ENCODE measurements at regions of chr19 and their contacts with region 1.

Region 1: DNA sequence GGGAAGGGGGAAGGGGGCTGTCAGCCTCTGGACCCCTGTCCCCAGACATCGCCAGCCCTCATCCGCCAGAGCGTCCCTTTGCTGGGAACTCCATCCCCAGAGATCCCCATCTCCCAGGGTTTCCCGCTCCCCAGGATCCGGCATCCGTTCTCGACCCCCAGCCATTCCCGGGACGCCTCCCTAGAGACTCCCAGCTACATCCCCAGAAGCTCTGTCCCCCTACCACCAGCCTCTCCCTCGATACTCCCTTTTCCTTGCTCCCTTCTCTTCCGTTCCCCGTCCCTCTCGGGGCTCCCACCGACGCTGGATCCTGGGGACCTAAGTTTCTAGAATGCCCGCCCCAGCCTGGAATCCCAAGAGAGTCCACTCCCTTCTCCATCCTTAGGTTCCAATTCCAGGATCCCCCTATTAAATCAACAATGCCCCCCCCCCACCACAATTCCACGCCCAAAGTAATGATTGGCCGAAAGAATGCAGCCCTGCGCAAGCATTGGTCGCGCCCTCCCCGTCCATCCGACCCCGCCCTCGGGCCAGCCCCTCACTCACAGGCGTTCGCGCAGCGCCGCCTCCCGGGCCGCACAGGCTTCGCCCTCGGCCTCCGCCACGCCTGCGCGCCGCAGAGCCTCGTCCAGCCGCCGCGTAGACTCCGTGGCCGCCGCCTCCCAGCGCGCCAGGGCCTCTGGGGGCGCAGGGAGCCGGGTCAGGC is 3.2 kb downstream of the CCDC194 start:
- DNase-seq: peak; percentile 93
- H3K4me3 Mint-ChIP-seq: peak overlapping the region; percentile 82
- H3K27ac Mint-ChIP-seq: no peak overlapping the region
- H3K4me1 Mint-ChIP-seq: peaks cover 20% of the 10 kb centered on the region
- H3K27me3 Mint-ChIP-seq: no peaks in the 10 kb centered on the region

Region 2: DNA sequence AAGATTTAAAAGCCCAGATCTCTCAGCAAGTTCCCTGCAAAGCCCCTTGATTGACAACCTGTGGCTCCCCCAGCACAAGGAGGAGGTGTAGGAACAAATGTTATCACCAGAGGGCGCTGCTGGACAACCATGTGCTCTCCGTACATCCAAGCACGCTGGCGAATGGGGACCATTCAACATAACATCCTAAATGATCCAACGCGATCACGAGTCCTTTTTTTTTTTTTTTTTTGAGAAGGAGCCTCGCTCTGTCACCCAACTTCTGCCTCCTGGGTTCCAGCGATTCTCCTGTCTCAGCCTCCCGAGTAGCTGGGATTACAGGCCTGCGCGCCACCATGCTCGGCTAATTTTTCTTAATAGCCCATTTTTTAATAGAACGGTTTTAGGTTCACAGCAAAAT is 619.2 kb before region 1 on chr19:
- CTCF ChIA-PET with region 1: interaction called, 3 read pairs
- intact Hi-C with region 1: loop called (anchors 10 kb)
- DNase-seq: peak; percentile 88
- H3K4me3 Mint-ChIP-seq: no peak overlapping the region
- H3K27ac Mint-ChIP-seq: no peak overlapping the region
- H3K4me1 Mint-ChIP-seq: no peaks in the 10 kb centered on the region
- H3K27me3 Mint-ChIP-seq: peaks cover 11% of the 10 kb centered on the region

Region 3: DNA sequence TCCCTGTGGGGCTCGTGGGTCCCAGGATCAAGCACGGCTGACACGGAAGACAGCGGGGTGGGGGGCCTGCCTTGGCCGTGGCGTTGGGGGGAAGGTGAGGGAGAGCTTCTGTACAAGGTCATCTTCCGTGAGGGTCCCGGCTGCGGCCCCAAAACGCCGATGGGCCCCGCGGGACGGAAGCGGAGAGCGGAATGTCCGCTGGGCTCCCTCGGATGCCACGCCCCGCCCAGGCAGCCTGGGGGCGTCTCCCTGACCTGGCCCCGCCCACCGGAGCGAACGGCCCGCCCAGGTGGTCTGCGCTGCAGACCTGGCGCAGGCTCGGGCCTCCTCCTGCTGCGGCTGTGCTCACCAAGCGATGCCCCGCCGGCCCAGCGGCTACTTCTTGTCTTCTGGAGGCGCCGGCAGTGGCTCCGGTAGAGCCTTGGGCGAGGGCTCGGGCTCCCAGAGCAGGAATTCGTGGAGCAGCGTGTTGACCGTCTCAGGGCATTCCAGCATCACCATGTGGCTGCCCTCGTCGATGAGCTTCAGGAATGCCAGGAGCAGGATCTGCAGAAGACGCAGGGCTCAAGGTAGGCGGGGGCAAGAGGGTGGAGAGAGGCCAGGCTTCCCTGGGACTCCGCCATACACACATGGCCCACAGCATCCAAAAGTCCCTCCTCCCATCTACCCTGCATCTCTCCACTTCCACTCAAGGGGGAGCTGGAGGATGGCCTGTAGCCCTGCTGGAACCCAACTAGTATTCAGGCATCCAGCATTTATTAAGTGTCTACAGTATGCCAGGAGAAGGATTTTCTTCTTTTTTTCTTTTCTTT is 98.3 kb before region 1 on chr19:
- CTCF ChIA-PET with region 1: interaction called, 11 read pairs
- intact Hi-C with region 1: loop called (anchors 1 kb)
- DNase-seq: peak; percentile 88
- H3K4me3 Mint-ChIP-seq: peak overlapping the region; percentile 87
- H3K27ac Mint-ChIP-seq: peak overlapping the region; percentile 56
- H3K4me1 Mint-ChIP-seq: peaks cover 8% of the 10 kb centered on the region
- H3K27me3 Mint-ChIP-seq: no peaks in the 10 kb centered on the region

Region 4: DNA sequence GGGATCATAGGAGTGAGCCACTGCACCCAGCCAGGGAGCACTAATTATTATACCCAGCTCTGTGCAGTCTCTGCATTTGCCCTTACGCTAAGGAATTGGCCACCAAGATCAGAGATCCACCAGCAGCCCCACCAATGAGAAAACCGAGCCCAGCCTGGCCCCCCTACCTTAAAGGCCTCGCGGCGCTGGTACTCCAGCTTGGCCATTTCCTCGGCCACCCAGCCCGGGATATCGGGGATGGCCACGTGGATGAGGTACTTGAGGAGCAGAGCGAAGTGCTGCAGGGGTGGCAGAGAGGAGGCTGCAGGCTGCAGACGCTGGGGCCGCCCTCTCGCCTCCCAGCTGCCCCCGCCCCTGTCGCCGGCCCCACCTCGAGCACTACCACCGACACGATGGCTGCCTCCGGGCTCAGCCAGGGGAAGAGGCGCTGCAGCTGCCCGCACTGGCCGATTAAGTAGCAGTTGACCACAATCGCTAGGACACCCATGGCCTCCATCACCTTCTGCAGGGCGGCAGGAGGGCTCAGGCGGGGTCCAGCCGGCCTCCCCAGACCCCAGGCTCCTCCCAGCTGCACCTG is 63.7 kb before region 1 on chr19:
- CTCF ChIA-PET with region 1: no interaction called
- intact Hi-C with region 1: no loop called
- DNase-seq: no peak
- H3K4me3 Mint-ChIP-seq: peak overlapping the region; percentile 21
- H3K27ac Mint-ChIP-seq: no peak overlapping the region
- H3K4me1 Mint-ChIP-seq: peaks cover 13% of the 10 kb centered on the region
- H3K27me3 Mint-ChIP-seq: no peaks in the 10 kb centered on the region

Region 5: DNA sequence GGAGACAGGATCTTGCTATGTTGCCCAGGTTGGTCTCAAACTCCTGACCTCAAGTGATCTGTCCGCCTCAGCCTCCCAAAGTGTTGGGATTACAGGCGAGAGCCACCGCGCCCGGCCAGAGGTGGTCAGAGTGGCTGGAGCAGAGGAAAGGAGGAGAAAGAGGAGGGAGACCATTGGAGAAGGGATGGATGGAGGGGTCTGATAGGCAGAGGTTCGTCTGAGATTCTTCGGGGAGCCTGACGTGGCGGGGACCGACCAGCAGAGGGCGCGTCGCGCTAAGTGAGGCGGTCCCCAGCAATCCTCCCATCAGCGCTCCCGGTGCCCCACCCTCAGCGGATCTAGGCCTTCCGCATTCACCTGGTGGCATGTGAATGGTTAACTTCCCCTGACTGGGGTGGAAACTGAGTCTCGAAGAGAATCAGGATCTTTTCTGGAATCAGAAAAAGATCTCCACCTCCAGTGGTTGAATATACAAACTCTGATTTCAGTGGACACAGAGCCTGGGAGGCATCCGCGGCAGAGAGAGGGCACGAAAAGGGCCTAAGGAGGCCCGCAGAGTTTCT is 44.6 kb before region 1 on chr19:
- CTCF ChIA-PET with region 1: interaction called, 17 read pairs
- intact Hi-C with region 1: loop called (anchors 1 kb)
- DNase-seq: peak; percentile 88
- H3K4me3 Mint-ChIP-seq: no peak overlapping the region
- H3K27ac Mint-ChIP-seq: no peak overlapping the region
- H3K4me1 Mint-ChIP-seq: peaks cover 3% of the 10 kb centered on the region
- H3K27me3 Mint-ChIP-seq: peaks cover 8% of the 10 kb centered on the region

Region 6: GRCh38 chr19:17419621-17420466 is 29.0 kb after region 1 on chr19 and contains the start of gene MVB12A:
- CTCF ChIA-PET with region 1: interaction called, 5 read pairs
- intact Hi-C with region 1: loop called (anchors 1 kb)
- DNase-seq: peak; percentile 98
- H3K4me3 Mint-ChIP-seq: peak within 1 kb of the TSS; percentile 87
- H3K27ac Mint-ChIP-seq: peak within 1 kb of the TSS; percentile 87
- H3K4me1 Mint-ChIP-seq: peaks cover 16% of the 10 kb centered on the region
- H3K27me3 Mint-ChIP-seq: no peaks in the 10 kb centered on the region
- total RNA-seq, gene MVB12A: 29.3 to 32.1 TPM

Region 7: GRCh38 chr19:18328340-18329034 is 937.7 kb after region 1 on chr19:
- CTCF ChIA-PET with region 1: no interaction called
- intact Hi-C with region 1: no loop called
- DNase-seq: peak; percentile 96
- H3K4me3 Mint-ChIP-seq: peak overlapping the region; percentile 68
- H3K27ac Mint-ChIP-seq: no peak overlapping the region
- H3K4me1 Mint-ChIP-seq: peaks cover 21% of the 10 kb centered on the region
- H3K27me3 Mint-ChIP-seq: no peaks in the 10 kb centered on the region

Measured in activated naive CD4-positive, alpha-beta T cell treated with anti-CD3 and anti-CD28 coated beads for 36 hours (primary cell).